ENCODE measurements at regions of chr10 and their contacts with region 1.

Region 1: GRCh38 chr10:1043532-1043995 is 5.4 kb downstream of the IDI1 start:
- DNase-seq: peak in 4 of 5 donors; percentile 37 to 58 (median 46)
- H3K4me3 ChIP-seq: peak overlapping the region in 1 of 2 donors; percentile 42
- H3K4me3 Mint-ChIP-seq: peak overlapping the region; percentile 73 to 89 (median 85)
- H3K27ac ChIP-seq: peak overlapping the region; percentile 56
- H3K27ac Mint-ChIP-seq: peak overlapping the region; percentile 86 to 97 (median 94)
- H3K4me1 ChIP-seq: peaks cover 49% of the 10 kb centered on the region
- H3K4me1 Mint-ChIP-seq: peaks cover 32 to 55% (median 44%) of the 10 kb centered on the region in 4 donors
- H3K27me3 ChIP-seq: no peaks in the 10 kb centered on the region
- H3K27me3 Mint-ChIP-seq: no peaks in the 10 kb centered on the region

Region 2: DNA sequence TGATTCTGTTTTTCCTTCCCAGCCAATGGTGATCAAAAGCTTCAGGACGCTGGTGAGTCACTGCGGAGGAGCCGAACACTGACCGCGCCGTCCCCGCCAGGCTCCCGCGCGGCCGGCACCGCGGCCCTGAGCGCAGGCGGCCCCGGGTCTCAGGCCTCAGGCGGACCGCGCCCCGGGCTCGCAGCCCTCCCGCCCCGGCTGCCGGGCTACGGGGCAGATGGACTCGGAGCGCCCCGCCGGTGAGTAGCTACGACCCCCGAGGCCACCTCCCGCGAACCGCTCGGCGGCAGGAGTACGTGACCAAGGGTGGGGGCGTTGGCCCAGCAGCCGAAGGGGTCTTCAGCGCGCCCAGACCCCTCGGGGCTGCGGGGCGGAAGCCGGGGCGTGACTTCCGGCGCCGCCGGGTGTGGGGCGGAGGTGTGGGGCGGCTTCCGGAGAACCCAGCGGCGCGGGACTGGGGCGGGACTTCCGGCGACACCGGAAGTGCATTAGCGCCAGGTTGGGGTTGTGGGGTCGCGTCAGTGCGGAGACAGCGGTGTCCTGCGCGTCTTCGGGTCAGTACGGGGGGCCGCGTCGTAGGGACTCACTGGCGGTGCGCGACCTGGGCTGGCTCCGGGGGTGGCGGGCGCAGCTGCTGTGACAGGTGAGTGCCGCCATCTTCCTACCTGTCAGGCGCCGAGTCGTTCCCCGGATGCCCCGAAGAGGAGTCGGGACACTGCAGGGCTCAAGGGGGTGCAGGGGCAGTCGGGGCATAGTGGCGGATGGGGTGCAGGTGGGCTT is 13.0 kb after region 1 on chr10 and contains the start of gene WDR37:
- CTCF ChIA-PET with region 1: interaction called, 4 read pairs
- POLR2A ChIA-PET with region 1: interaction called, 33 read pairs
- intact Hi-C with region 1: loop called (anchors 1 kb)
- DNase-seq: peak; percentile 86 to 89 (median 87)
- H3K4me3 ChIP-seq: peak within 1 kb of the TSS; percentile 67 to 89
- H3K4me3 Mint-ChIP-seq: peak within 1 kb of the TSS; percentile 94 to 98 (median 96)
- H3K27ac ChIP-seq: peak within 1 kb of the TSS; percentile 98
- H3K27ac Mint-ChIP-seq: peak within 1 kb of the TSS; percentile 93 to 99 (median 95)
- H3K4me1 ChIP-seq: peaks cover 74% of the 10 kb centered on the region
- H3K4me1 Mint-ChIP-seq: peaks cover 55 to 97% (median 76%) of the 10 kb centered on the region in 4 donors
- H3K27me3 ChIP-seq: no peaks in the 10 kb centered on the region
- H3K27me3 Mint-ChIP-seq: no peaks in the 10 kb centered on the region
- total RNA-seq, gene WDR37: 41.7 to 42.5 TPM

Region 3: DNA sequence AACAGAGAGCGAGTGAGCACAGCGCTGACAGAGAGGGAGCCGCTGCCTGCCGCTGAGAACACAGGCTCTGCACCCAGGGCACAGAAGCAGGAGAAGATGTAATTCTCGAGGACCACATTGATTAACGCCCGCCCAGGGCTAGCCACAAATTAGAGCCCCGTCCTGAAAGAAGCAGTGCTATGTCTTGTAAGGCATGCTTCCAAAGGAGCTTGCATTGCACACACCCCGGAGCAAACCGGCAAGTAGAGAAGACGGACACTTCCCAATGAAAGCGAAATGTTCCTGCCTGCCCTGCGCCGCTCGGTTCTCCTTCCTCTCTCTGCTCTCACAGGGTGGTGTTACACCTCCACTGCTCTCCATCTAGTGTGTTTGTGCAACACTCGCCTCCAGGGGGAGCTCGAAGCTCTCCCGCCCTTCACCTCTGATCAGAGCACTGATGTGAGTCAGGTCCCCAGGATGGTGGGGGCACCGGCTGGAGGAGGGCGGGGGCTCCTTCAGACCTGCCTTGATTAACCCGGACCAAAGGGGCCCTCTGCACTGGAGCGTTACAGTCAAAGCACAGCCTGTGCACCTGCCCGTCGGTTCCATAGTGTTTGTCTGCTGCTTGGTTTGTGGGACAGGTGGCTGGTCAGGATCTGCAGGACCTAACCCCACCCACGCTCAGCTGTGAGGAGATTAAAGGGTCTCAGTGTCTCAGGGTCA is 377.2 kb after region 1 on chr10:
- CTCF ChIA-PET with region 1: no interaction called
- POLR2A ChIA-PET with region 1: no interaction called
- intact Hi-C with region 1: no loop called
- DNase-seq: peak; percentile 24 to 56 (median 27)
- H3K4me3 ChIP-seq: no peak overlapping the region
- H3K4me3 Mint-ChIP-seq: peak overlapping the region; percentile 13 to 70 (median 48)
- H3K27ac ChIP-seq: no peak overlapping the region
- H3K27ac Mint-ChIP-seq: no peak overlapping the region
- H3K4me1 ChIP-seq: peaks cover 6% of the 10 kb centered on the region
- H3K4me1 Mint-ChIP-seq: peaks cover 4 to 11% (median 10%) of the 10 kb centered on the region in 4 donors
- H3K27me3 ChIP-seq: no peaks in the 10 kb centered on the region
- H3K27me3 Mint-ChIP-seq: peaks cover 14 to 41% of the 10 kb centered on the region in 2 donors

Measured in CD4-positive, alpha-beta memory T cell (primary cell).